Activated CD4-positive, alpha-beta memory T cell treated with anti-CD3 and anti-CD28 coated beads, Interleukin-2, amount 10 ng/mL, durations not matched to agents 7 days and 5 days (primary cell): ENCODE measurements at regions of chr19 and their contacts with region 1.

Region 1: DNA sequence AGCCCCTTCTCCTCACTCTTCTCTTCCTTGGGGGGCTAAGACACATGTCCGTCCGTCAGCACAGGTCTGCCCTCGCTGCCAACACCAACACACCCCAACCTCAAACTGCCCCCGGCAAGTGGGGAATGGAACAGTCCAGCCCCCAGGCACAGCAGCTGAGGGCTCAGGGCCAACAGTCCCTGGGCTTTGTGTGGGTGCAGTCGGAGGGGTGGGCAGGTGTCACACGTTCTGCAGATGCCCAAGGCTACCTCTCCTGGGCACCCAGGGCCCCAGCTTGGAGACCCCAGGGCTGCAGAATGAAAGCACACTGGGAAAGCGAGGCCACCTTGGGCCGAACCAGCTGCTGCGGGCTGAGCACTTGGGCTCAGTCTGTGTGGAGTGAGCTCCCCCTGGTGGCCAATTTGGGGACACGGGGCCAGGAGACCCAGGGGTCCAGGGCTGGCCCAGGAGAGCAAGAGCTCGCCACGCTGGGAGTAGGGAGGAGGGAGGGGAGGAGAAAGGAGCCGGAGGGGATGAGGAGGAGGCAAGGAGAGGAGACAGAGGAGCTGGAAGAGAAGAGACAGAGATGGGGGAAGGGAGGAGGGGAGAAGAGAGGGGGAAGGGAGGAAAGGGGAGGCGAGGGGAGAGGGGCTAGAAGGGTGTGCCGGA is 14.0 kb upstream of the ATP8B3 start:
- DNase-seq: peak; percentile 78
- H3K4me3 Mint-ChIP-seq: no peak overlapping the region
- H3K27ac Mint-ChIP-seq: no peak overlapping the region
- H3K4me1 Mint-ChIP-seq: peaks cover 3% of the 10 kb centered on the region
- H3K27me3 Mint-ChIP-seq: no peaks in the 10 kb centered on the region

Region 2: DNA sequence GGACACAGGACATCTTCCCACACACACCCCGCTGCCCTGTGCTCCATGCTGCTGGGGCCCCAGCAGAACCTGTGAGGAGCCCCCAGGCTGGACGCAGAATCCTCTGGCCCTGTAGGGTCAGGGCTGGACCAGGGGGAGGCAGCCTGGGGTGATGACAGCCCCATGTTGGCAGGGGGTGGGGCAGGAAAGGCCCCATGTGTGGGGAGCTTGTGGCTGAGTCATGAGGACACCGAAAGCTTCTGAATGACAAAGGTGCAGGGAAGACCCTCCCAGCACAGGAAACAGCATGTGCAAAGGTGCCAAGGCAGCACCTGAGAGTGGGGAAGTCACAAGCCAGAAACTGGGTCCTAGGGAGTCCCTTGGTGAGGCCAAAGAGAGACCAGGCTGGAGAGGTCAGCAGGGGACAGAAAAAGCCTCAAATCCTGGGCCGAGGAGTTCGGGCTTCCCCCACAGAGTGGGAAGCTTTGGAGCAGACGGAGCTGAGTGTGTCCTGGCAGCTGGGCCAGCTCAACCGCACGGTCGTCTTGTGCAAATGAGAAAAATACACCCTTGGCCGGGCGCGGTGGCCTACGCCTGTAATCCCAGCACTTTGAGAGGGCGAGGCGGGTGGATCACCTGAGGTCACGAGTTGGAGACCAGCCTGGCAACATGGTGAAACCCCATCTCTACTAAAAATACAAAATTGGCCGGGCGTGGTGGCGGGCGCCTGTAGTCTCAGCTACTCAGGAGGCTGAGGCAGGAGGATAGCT is 31.4 kb before region 1 on chr19:
- CTCF ChIA-PET with region 1: interaction called, 14 read pairs
- POLR2A ChIA-PET with region 1: no interaction called
- DNase-seq: no peak
- H3K4me3 Mint-ChIP-seq: no peak overlapping the region
- H3K27ac Mint-ChIP-seq: no peak overlapping the region
- H3K4me1 Mint-ChIP-seq: peaks cover 8% of the 10 kb centered on the region
- H3K27me3 Mint-ChIP-seq: peaks cover 4% of the 10 kb centered on the region

Region 3: GRCh38 chr19:1812469-1813196 is 13.4 kb before region 1 on chr19:
- CTCF ChIA-PET with region 1: interaction called, 12 read pairs
- POLR2A ChIA-PET with region 1: interaction called, 4 read pairs
- DNase-seq: peak; percentile 98
- H3K4me3 Mint-ChIP-seq: peak overlapping the region; percentile 92
- H3K27ac Mint-ChIP-seq: peak overlapping the region; percentile 97
- H3K4me1 Mint-ChIP-seq: peaks cover 27% of the 10 kb centered on the region
- H3K27me3 Mint-ChIP-seq: no peaks in the 10 kb centered on the region

Region 4: DNA sequence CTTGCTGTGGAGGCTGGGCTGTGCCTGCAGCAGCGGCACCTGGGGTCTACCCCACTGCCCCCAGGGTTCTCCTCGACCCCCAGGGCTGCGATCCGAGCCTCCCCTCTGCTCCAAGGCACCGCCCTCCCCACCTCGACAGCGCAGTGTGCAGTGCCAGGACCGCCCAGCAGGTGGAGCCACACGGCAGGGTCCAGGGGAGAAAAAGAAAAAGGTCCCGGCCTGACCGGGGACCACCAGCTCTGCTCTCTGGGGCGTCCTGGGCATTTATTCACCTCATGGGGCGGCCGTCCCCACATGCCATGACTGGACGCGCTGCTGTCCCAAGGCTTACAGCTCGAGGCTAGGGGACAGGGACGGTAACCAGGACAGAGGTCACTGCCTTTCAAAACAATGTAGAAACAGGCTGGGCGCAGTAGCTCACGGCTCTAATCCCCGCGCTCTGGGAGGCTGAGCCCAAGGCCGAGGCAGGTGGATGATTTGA is 11.6 kb after region 1 on chr19:
- CTCF ChIA-PET with region 1: interaction called, 20 read pairs
- POLR2A ChIA-PET with region 1: interaction called, 4 read pairs
- DNase-seq: peak; percentile 66
- H3K4me3 Mint-ChIP-seq: no peak overlapping the region
- H3K27ac Mint-ChIP-seq: no peak overlapping the region
- H3K4me1 Mint-ChIP-seq: peaks cover 4% of the 10 kb centered on the region
- H3K27me3 Mint-ChIP-seq: no peaks in the 10 kb centered on the region